Stomach (tissue), 19 donors: ENCODE measurements at regions of chr4 and their contacts with region 1.

Region 1: GRCh38 chr4:37603070-37603468 is 83.1 kb downstream of the RELL1 start:
- DNase-seq: peak; percentile 87 to 92
- H3K4me3 ChIP-seq: no peak overlapping the region
- H3K27ac ChIP-seq: no peak overlapping the region
- H3K4me1 ChIP-seq: peaks cover 0 to 45% (median 12%) of the 10 kb centered on the region in 4 donors
- H3K27me3 ChIP-seq: no peaks in the 10 kb centered on the region
- CTCF ChIP-seq: peak in 6 of 7 experiments; percentile 81 to 99 (median 98)
- EP300 ChIP-seq: no peak
- POLR2A ChIP-seq: no peak

Region 2: GRCh38 chr4:37528166-37528885 is 74.7 kb before region 1 on chr4:
- intact Hi-C with region 1: no loop called
- DNase-seq: peak; percentile 59 to 64
- H3K4me3 ChIP-seq: no peak overlapping the region
- H3K27ac ChIP-seq: peak overlapping the region in 1 of 5 donors; percentile 47
- H3K4me1 ChIP-seq: no peaks in the 10 kb centered on the region
- H3K27me3 ChIP-seq: no peaks in the 10 kb centered on the region
- CTCF ChIP-seq: peak in 1 of 7 experiments; percentile 33
- EP300 ChIP-seq: no peak
- POLR2A ChIP-seq: no peak

Region 3: DNA sequence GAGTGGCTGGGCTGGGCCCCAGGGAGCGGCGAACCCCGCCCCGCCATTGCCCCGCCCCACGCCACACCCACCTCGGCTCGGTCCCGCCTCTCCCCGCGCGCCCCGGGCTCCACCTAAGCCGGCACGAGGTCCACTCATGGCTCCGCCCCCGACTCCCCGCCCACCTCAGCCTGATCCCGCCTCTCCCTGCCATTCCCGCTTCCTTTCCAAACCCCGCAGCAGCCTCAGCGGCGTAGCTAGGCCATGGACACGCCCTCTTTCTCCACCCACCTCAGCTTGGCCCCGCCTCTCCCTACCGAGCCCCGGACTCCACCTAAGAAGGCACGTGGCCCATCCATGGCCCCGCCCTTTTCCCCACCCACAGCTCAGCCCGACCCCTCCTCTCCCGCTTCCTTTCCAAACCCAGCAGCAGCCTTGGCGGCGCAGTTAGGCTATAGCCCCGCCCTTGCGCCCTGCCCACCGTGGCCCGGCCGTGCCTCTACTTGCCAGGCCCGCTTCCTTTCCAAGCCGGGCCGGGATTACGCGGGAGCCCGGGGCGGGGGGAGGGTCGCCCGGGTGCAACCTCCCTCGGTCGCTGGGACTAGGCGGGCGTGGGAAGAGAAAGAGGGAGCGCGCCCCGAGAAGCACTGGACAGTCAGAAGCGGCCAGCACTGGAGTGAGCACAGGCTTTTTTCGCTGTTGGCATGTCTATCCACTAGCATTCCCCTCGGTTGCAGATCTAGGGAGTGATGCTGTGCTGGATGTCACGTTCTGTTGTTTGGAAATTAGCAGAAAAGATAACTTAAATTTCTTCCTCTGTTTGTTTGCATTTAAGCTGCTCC is 83.5 kb after region 1 on chr4 and contains the start of gene RELL1:
- intact Hi-C with region 1: loop called (anchors 10 kb)
- DNase-seq: peak; percentile 100
- H3K4me3 ChIP-seq: peak within 1 kb of the TSS; percentile 65 to 97 (median 82)
- H3K27ac ChIP-seq: peak within 1 kb of the TSS; percentile 93 to 99 (median 98)
- H3K4me1 ChIP-seq: peaks cover 18 to 51% (median 41%) of the 10 kb centered on the region in 4 donors
- H3K27me3 ChIP-seq: no peaks in the 10 kb centered on the region
- CTCF ChIP-seq: no peak
- EP300 ChIP-seq: no peak
- POLR2A ChIP-seq: no peak
- total RNA-seq, gene RELL1: 2.9 to 113 (median 92.5) TPM

Region 4: GRCh38 chr4:37793562-37793961 is 190.5 kb after region 1 on chr4:
- intact Hi-C with region 1: loop called (anchors 5 kb)
- DNase-seq: peak in 1 of 2 donors; percentile 34
- H3K4me3 ChIP-seq: no peak overlapping the region
- H3K27ac ChIP-seq: no peak overlapping the region
- H3K4me1 ChIP-seq: peaks cover 0 to 4% (median 0%) of the 10 kb centered on the region in 4 donors
- H3K27me3 ChIP-seq: no peaks in the 10 kb centered on the region
- CTCF ChIP-seq: peak in 4 of 7 experiments; percentile 15 to 41 (median 26)
- EP300 ChIP-seq: no peak
- POLR2A ChIP-seq: no peak